Caco-2 (cell line): ENCODE measurements at regions of chr4 and their contacts with region 1.

Region 1: DNA sequence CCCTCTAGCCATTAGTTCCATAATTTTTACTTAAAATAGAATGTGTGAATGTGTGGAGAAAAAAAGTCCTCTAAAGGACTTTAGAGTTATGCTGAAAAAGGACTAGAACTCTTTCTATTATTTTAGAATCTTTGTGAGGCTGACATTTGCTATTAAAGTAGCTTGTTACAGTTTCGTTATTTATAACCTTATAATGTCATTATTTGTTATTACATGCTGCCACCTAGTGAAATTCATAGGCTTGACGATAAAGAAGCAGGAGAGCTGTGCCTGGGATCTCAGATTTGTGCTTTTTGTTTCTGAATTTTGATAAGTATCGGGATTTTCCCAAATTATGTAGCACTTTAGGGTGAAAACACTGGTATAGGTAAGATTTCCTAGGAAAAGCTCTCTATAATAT is 38.5 kb upstream of the TAPT1 start:
- DNase-seq: peak in 1 of 2 experiments; percentile 46
- H3K4me3 ChIP-seq: no peak overlapping the region
- H3K4me3 Mint-ChIP-seq: no peak overlapping the region
- H3K27ac Mint-ChIP-seq: no peak overlapping the region
- H3K4me1 ChIP-seq: no peaks in the 10 kb centered on the region
- H3K4me1 Mint-ChIP-seq: no peaks in the 10 kb centered on the region
- H3K27me3 ChIP-seq: no peaks in the 10 kb centered on the region
- H3K27me3 Mint-ChIP-seq: no peaks in the 10 kb centered on the region
- CTCF ChIP-seq: peak; percentile 44 to 45

Region 2: GRCh38 chr4:15882675-15883086 is 382.1 kb before region 1 on chr4:
- CTCF ChIA-PET with region 1: interaction called, 13 read pairs
- POLR2A ChIA-PET with region 1: no interaction called
- intact Hi-C with region 1: loop called (anchors 5 kb)
- DNase-seq: peak; percentile 53 to 71
- H3K4me3 ChIP-seq: no peak overlapping the region
- H3K4me3 Mint-ChIP-seq: no peak overlapping the region
- H3K27ac Mint-ChIP-seq: no peak overlapping the region
- H3K4me1 ChIP-seq: no peaks in the 10 kb centered on the region
- H3K4me1 Mint-ChIP-seq: no peaks in the 10 kb centered on the region
- H3K27me3 ChIP-seq: no peaks in the 10 kb centered on the region
- H3K27me3 Mint-ChIP-seq: peaks cover 2% of the 10 kb centered on the region
- CTCF ChIP-seq: peak; percentile 85 to 88

Region 3: DNA sequence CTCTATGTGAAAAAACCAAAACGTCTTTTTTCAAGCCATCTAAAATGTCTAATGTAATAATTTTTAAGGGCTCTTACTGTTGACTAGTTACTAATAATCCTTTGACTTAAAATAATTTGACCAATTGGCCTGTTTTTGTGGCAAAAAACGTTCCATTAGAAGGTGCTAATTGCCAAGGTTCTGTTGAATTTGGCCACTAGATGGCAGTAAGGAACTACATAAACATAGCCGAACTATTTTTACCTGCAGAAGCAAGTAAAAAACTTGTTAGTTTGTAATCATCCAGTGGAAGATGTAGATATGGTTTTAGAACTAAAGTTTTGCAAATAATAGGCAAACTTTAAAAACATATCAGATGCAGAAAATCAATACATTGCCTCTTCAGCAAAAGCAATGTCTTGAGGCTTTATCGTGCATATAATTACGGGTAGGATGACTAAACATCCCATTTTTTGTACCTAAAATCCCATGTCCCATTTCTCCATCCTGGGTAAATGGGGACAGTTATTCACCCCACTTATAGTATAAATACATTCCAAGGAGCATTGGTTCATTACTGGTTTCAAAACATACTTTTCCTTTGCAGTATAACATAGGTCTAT is 238.5 kb before region 1 on chr4:
- CTCF ChIA-PET with region 1: interaction called, 3 read pairs
- POLR2A ChIA-PET with region 1: no interaction called
- intact Hi-C with region 1: loop called (anchors 1 kb)
- DNase-seq: peak in 1 of 2 experiments; percentile 62
- H3K4me3 ChIP-seq: no peak overlapping the region
- H3K4me3 Mint-ChIP-seq: no peak overlapping the region
- H3K27ac Mint-ChIP-seq: no peak overlapping the region
- H3K4me1 ChIP-seq: peaks cover 39% of the 10 kb centered on the region
- H3K4me1 Mint-ChIP-seq: peaks cover 12% of the 10 kb centered on the region
- H3K27me3 ChIP-seq: no peaks in the 10 kb centered on the region
- H3K27me3 Mint-ChIP-seq: no peaks in the 10 kb centered on the region
- CTCF ChIP-seq: peak; percentile 56 to 70

Region 4: DNA sequence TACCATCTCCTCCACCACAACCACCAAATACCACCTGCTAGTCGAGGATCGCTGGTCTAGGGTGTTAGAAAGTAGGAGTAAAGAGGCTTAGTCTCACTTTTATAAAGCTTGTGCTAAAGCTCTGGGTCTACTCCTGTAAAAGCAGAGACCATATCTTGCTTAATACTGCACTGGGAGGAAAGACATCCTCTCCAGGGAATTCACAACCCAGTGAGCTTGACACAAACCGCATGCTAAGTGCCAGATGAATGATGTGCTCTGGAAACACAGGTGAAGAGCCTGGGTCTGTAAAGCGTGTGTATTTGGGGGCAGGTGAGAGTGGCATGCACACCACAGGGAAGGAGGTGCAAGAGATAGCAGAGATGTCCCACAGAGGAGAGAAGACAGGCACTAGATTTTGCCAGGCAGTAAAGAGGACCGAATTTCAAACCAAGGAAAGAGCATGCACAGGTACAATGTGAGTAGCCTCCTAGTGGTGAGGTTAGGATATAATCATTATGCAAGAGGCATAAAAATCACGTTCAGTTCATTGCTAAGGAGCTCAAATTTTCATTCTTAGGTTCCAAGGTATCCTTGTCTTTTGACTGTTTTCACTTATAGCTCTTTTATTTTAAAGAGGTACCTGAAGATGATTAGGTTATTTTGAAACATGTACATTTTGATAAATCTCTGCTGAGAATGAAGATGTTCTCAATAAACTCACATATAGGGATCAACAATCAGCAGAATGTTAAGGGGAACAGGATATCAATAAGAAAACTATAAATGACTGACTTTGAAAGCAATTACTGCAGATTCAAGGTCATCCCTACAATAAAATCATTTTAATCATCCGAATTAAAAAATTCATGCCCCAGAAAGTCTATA is 59.3 kb before region 1 on chr4:
- CTCF ChIA-PET with region 1: interaction called, 13 read pairs
- POLR2A ChIA-PET with region 1: no interaction called
- intact Hi-C with region 1: loop called (anchors 1 kb)
- DNase-seq: peak in 1 of 2 experiments; percentile 15
- H3K4me3 ChIP-seq: no peak overlapping the region
- H3K4me3 Mint-ChIP-seq: no peak overlapping the region
- H3K27ac Mint-ChIP-seq: no peak overlapping the region
- H3K4me1 ChIP-seq: no peaks in the 10 kb centered on the region
- H3K4me1 Mint-ChIP-seq: peaks cover 7% of the 10 kb centered on the region
- H3K27me3 ChIP-seq: no peaks in the 10 kb centered on the region
- H3K27me3 Mint-ChIP-seq: no peaks in the 10 kb centered on the region
- CTCF ChIP-seq: peak; percentile 59 to 64

Region 5: GRCh38 chr4:16516796-16517439 is 252.1 kb after region 1 on chr4:
- CTCF ChIA-PET with region 1: no interaction called
- POLR2A ChIA-PET with region 1: no interaction called
- intact Hi-C with region 1: no loop called
- DNase-seq: no peak
- H3K4me3 ChIP-seq: no peak overlapping the region
- H3K4me3 Mint-ChIP-seq: no peak overlapping the region
- H3K27ac Mint-ChIP-seq: no peak overlapping the region
- H3K4me1 ChIP-seq: no peaks in the 10 kb centered on the region
- H3K4me1 Mint-ChIP-seq: no peaks in the 10 kb centered on the region
- H3K27me3 ChIP-seq: no peaks in the 10 kb centered on the region
- H3K27me3 Mint-ChIP-seq: peaks cover 3% of the 10 kb centered on the region
- CTCF ChIP-seq: no peak